ENCODE measurements at regions of chr6 and their contacts with region 1.

Region 1: DNA sequence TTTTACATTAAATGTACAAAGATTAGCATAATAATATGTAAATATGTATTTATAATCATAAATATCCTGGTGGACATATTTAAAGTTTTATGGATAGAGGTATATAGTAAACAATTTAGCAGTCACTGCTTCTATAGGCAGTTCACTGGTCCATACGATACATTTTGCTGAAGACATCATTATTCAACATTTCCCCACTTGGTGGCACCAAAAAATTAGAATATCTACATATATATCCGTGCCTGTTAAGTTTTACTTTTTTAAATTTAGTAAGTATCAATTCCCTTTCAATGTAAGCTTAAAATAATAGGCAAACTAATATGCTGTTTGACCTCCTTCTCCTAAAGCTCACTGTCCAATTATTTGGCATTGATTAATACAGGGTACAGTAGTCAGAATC is 64.2 kb downstream of the LMBRD1 start:
- DNase-seq: peak; percentile 4
- H3K4me3 Mint-ChIP-seq: no peak overlapping the region
- H3K27ac Mint-ChIP-seq: no peak overlapping the region
- H3K4me1 Mint-ChIP-seq: no peaks in the 10 kb centered on the region
- H3K27me3 Mint-ChIP-seq: no peaks in the 10 kb centered on the region
- CTCF ChIP-seq: peak; percentile 14

Region 2: GRCh38 chr6:68876792-68877493 is 855.7 kb before region 1 on chr6:
- CTCF ChIA-PET with region 1: no interaction called
- POLR2A ChIA-PET with region 1: no interaction called
- intact Hi-C with region 1: loop called (anchors 2 kb)
- DNase-seq: peak; percentile 22
- H3K4me3 Mint-ChIP-seq: no peak overlapping the region
- H3K27ac Mint-ChIP-seq: no peak overlapping the region
- H3K4me1 Mint-ChIP-seq: no peaks in the 10 kb centered on the region
- H3K27me3 Mint-ChIP-seq: peaks cover 69% of the 10 kb centered on the region
- CTCF ChIP-seq: peak; percentile 36

Region 3: DNA sequence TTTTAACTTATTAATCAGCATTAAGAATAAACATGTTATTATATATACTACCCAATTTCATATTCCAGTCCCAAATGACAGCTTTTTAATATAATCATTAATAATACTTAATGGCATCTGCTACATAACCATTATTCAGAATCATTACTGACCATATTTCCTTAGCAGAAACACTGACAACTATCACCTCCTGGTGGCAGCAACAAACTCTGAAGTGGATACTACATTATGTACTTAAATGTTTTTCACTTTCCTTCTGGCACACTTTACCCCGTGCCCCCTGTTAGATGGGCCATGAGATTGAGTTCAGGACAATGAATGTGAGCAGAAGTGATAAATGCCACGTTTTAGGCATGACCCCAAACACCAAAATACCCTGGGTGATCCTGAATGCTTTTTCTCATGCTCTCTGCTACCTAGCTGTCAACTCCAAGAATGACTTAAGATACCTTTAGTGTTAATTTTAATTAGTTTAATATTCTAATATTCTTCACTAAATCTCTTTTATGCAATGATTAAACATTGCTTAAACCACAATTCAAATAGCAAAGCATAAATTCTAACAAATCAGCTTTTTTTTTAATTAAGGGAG is 12.9 kb before region 1 on chr6:
- CTCF ChIA-PET with region 1: interaction called, 10 read pairs
- POLR2A ChIA-PET with region 1: no interaction called
- intact Hi-C with region 1: no loop called
- DNase-seq: peak; percentile 33
- H3K4me3 Mint-ChIP-seq: no peak overlapping the region
- H3K27ac Mint-ChIP-seq: no peak overlapping the region
- H3K4me1 Mint-ChIP-seq: no peaks in the 10 kb centered on the region
- H3K27me3 Mint-ChIP-seq: no peaks in the 10 kb centered on the region
- CTCF ChIP-seq: peak; percentile 43

Region 4: DNA sequence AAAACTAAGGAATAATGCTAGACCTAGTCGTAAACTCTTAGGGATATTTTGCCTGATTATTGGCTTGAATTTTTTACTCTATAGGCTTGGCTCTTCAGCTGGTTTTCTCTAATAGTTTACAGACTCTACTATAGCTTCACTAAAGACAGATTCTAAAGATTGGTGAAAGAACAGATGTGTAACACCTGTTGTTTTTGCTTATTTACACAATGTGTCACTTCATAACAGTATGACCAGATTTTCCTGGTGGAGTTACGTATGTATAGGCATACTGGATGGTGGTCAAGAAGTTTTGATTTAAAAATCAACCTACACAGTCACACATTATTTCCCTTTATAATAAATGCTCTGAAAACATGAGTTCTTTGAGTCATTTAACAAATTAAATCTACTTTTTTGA is 138.5 kb after region 1 on chr6:
- CTCF ChIA-PET with region 1: no interaction called
- POLR2A ChIA-PET with region 1: no interaction called
- intact Hi-C with region 1: no loop called
- DNase-seq: no peak
- H3K4me3 Mint-ChIP-seq: no peak overlapping the region
- H3K27ac Mint-ChIP-seq: no peak overlapping the region
- H3K4me1 Mint-ChIP-seq: no peaks in the 10 kb centered on the region
- H3K27me3 Mint-ChIP-seq: peaks cover 80% of the 10 kb centered on the region
- CTCF ChIP-seq: no peak

Region 5: GRCh38 chr6:70166088-70166958 is 433.7 kb after region 1 on chr6:
- CTCF ChIA-PET with region 1: interaction called, 4 read pairs
- POLR2A ChIA-PET with region 1: no interaction called
- intact Hi-C with region 1: loop called (anchors 10 kb)
- DNase-seq: peak; percentile 38
- H3K4me3 Mint-ChIP-seq: no peak overlapping the region
- H3K27ac Mint-ChIP-seq: no peak overlapping the region
- H3K4me1 Mint-ChIP-seq: no peaks in the 10 kb centered on the region
- H3K27me3 Mint-ChIP-seq: peaks cover 100% of the 10 kb centered on the region
- CTCF ChIP-seq: peak; percentile 38